ENCODE measurements at regions of chr2 and their contacts with region 1.

Region 1: GRCh38 chr2:233100192-233100998 is 40.3 kb downstream of the INPP5D start:
- DNase-seq: peak in 9 of 10 donors; percentile 50 to 87 (median 73)
- ATAC-seq: peak; percentile 85 to 95
- H3K4me3 Mint-ChIP-seq: peak overlapping the region; percentile 61 to 86 (median 79)
- H3K27ac Mint-ChIP-seq: peak overlapping the region; percentile 56 to 95 (median 84)
- H3K4me1 Mint-ChIP-seq: peaks cover 43 to 89% (median 77%) of the 10 kb centered on the region in 4 donors
- H3K27me3 Mint-ChIP-seq: no peaks in the 10 kb centered on the region

Region 2: DNA sequence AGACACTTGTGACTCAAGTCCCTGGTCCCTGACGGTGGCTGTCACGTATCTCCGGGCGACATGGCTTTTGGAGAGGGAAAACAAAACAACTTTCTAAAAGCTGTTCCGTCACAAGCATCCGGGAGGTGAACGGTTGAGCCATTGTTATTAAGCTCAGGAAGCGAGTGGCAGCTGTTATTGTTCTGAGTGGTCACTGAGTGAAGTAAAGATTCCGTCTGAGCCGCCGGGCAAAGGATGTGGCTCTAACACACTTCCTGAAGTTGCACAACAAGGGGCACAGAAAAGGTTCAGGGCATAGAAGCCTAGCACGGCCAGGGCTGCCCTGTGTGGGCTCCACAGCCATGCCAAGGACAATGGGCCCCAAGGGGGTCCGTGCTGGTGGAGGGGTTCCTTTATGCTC is 15.9 kb before region 1 on chr2:
- POLR2A ChIA-PET with region 1: interaction called, 36 read pairs
- DNase-seq: peak in 5 of 10 donors; percentile 44 to 59 (median 54)
- ATAC-seq: peak; percentile 27 to 64
- H3K4me3 Mint-ChIP-seq: peak overlapping the region; percentile 68 to 89 (median 82)
- H3K27ac Mint-ChIP-seq: peak overlapping the region in 9 of 10 donors; percentile 88 to 98 (median 96)
- H3K4me1 Mint-ChIP-seq: peaks cover 52 to 96% (median 90%) of the 10 kb centered on the region in 4 donors
- H3K27me3 Mint-ChIP-seq: no peaks in the 10 kb centered on the region

Region 3: DNA sequence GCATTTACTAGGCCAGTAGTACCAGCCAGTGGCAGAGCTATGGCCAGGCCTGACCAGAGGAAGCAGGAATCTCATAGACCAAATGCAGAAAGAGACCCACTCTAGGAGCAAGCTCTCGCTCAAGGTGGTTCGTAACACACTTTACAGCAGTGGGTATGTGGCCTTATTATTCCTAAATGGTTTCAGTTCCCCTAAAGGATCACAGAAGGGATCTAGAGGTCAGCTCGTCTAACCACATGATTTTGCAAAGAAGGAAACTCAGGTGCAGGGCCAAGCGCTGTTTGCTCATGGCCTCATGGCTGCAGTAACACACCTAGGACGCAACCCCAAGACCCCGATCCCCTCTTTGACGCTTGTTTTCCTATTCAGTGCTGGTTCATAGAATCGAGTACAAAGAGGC is 85.6 kb after region 1 on chr2:
- POLR2A ChIA-PET with region 1: no interaction called
- DNase-seq: no peak
- ATAC-seq: no peak
- H3K4me3 Mint-ChIP-seq: no peak overlapping the region
- H3K27ac Mint-ChIP-seq: peak overlapping the region in 6 of 10 donors; percentile 6 to 79 (median 60)
- H3K4me1 Mint-ChIP-seq: peaks cover 0 to 11% (median 7%) of the 10 kb centered on the region in 4 donors
- H3K27me3 Mint-ChIP-seq: no peaks in the 10 kb centered on the region

Measured in naive thymus-derived CD8-positive, alpha-beta T cell (primary cell).